A549 (cell line): ENCODE measurements at regions of chr17 and their contacts with region 1.

Region 1: GRCh38 chr17:45686250-45686649 is 97.9 kb upstream of the CRHR1 start:
- DNase-seq: no peak
- ATAC-seq: no peak
- H3K4me3 ChIP-seq: no peak overlapping the region
- H3K27ac ChIP-seq: no peak overlapping the region
- H3K4me1 ChIP-seq: no peaks in the 10 kb centered on the region
- CTCF ChIP-seq: no peak
- EP300 ChIP-seq: no peak
- POLR2A ChIP-seq: no peak
- RAD21 ChIP-seq: no peak

Region 2: DNA sequence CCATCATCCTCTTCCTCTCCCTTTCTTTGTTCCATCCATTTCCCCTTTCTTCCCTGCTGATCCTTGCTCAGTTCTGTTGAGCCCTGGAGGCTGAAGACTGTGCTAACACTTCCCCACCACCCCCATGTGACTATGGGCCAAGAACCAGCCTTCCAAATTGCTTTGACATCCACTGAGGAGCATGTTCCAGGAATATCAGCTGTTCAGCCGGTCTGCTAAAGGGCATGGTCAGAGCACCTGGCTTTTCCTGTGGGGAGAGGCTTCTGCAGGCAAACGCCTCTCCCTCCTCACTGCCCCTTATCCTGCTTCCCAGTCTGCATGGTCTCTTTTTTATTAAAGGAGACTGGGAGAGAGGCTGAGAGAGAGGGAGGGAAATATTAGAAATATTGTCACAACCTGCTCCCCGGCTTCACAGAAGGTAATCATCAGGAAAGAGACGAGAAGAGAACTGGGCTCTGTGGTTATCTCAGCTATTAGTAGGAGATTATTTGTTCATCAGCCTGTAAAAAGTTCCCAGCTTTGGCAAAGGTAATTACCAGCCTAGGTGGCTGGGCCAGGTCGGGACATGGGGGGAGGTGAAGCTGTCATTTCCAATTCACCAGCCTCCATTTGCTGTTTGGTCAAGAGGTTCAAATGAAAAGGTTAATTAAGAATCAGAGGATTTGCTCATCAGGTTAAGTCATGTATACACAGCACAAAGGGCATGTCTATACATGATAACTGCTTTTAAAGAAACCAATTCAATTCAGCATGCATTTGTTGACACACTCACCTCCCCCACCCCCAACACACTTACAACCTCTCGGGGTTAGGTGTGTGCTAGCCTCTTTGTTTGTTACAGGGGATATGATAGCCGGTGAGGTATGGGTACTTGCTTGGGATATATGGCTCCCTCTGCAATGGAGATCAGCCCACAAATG is 14.2 kb after region 1 on chr17:
- CTCF ChIA-PET with region 1: interaction called, 14 read pairs
- POLR2A ChIA-PET with region 1: no interaction called
- DNase-seq: no peak
- ATAC-seq: no peak
- H3K4me3 ChIP-seq: no peak overlapping the region
- H3K27ac ChIP-seq: no peak overlapping the region
- H3K4me1 ChIP-seq: peaks cover 27% of the 10 kb centered on the region
- CTCF ChIP-seq: no peak
- EP300 ChIP-seq: no peak
- POLR2A ChIP-seq: no peak
- RAD21 ChIP-seq: no peak

Region 3: GRCh38 chr17:45719335-45720071 is 33.3 kb after region 1 on chr17:
- CTCF ChIA-PET with region 1: interaction called, 15 read pairs
- POLR2A ChIA-PET with region 1: no interaction called
- DNase-seq: peak; percentile 77 to 82
- ATAC-seq: peak; percentile 89 to 93
- H3K4me3 ChIP-seq: no peak overlapping the region
- H3K27ac ChIP-seq: no peak overlapping the region
- H3K4me1 ChIP-seq: peaks cover 5% of the 10 kb centered on the region; the same call in 2 of the 3 replicates
- CTCF ChIP-seq: 0 out of 3 replicates have a peak, but pooled peaks have one; percentile 24
- EP300 ChIP-seq: no peak
- POLR2A ChIP-seq: no peak
- RAD21 ChIP-seq: peak in 1 of 2 experiments; percentile 21; a peak in 1 of 5 replicates